ENCODE measurements at regions of chr2 and their contacts with region 1.

Region 1: GRCh38 chr2:223626716-223627115 is 24.6 kb upstream of the SCG2 start:
- DNase-seq: no peak
- ATAC-seq: no peak

Region 2: GRCh38 chr2:221948076-221948475 is 1678.6 kb before region 1 on chr2:
- intact Hi-C with region 1: loop called (anchors 5 kb)
- DNase-seq: no peak
- ATAC-seq: no peak